ENCODE measurements at regions of chr15 and their contacts with region 1.

Region 1: DNA sequence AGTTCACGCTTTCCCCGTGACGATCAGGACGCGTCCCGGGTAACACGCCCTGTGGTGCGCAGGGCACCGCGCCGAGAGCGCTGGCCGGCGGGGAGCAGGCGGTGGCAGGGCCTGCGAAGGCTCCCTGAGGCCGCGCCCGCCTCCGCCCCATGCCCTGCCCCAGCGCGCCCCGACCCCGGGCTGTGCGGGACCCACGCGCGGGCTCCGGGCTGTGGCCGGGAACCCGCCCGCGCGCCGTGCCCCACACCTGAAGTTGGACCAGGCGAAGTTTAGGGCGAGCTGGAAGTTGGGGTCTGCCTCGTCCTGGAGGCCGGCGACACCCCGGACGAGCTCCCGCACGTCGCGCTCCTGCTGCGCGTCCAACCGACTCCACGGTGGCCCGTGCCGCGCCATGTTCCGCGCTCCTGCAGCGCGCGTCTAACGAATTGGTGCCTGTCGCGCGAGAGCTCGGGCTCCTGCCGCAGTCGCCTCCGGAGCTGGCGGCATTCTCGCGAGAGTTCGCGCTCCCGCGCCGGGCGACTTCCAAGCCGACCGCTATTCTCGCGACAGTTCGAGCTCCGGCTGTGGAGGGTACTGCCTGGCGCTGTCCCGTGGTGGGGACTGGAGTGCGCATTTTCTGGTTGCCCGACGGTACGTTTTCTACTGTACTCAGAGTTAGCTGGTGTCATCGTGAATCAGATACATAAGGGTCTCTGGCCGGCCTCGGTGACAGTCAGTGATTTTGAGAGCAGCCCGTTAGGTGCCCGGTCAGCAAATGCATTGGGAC is at the start of gene TUBGCP5:
- DNase-seq: peak; percentile 87 to 98 (median 94)
- H3K4me3 ChIP-seq: peak within 1 kb of the TSS; percentile 54 to 98 (median 76)
- H3K27ac ChIP-seq: peak within 1 kb of the TSS in 58 of 59 donors; percentile 25 to 94 (median 80)
- H3K27me3 ChIP-seq: no peaks in the 10 kb centered on the region
- CTCF ChIP-seq: peak in 54 of 56 donors; percentile 16 to 65 (median 46)
- total RNA-seq, gene TUBGCP5: 15.4 to 49.6 (median 31.7) TPM

Region 2: GRCh38 chr15:22980189-22981050 is 58.9 kb before region 1 on chr15 and contains the start of gene CYFIP1:
- intact Hi-C with region 1: loop called in 1 of 2 experiments (anchors 5 kb)
- DNase-seq: peak in 8 of 10 donors; percentile 44 to 82 (median 60)
- H3K4me3 ChIP-seq: peak within 1 kb of the TSS; percentile 57 to 94 (median 84)
- H3K27ac ChIP-seq: peak within 1 kb of the TSS in 55 of 59 donors; percentile 12 to 88 (median 74)
- H3K27me3 ChIP-seq: no peaks in the 10 kb centered on the region
- CTCF ChIP-seq: no peak
- total RNA-seq, gene CYFIP1: 46.3 to 138 (median 84.8) TPM

Region 3: DNA sequence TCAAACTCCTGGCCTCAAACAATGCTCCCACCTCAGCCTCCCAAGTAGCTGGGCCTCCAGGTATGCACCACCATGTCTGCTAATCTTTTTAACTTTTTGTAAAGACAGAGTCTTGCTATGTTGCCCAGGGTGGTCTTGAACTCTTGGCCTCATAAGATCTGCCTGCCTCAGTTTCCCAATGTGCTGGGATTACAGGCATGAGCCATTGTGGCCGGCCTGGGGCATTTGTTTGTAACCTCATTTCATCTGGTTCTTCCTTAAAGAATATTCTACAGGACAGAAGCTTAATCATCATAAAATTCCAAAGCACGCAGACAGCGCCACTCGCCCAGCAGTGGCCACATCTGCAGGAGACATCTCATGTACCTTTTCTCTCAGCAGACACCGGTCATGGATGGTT is 35.6 kb before region 1 on chr15:
- intact Hi-C with region 1: no loop called
- DNase-seq: no peak
- H3K4me3 ChIP-seq: no peak overlapping the region
- H3K27ac ChIP-seq: no peak overlapping the region
- H3K27me3 ChIP-seq: no peaks in the 10 kb centered on the region
- CTCF ChIP-seq: no peak

Region 4: GRCh38 chr15:23472678-23473077 is 433.3 kb after region 1 on chr15:
- intact Hi-C with region 1: loop called in 1 of 2 experiments (anchors 5 kb)
- DNase-seq: peak in 1 of 10 donors; percentile 50
- H3K4me3 ChIP-seq: no peak overlapping the region
- H3K27ac ChIP-seq: no peak overlapping the region
- H3K27me3 ChIP-seq: no peaks in the 10 kb centered on the region
- CTCF ChIP-seq: no peak

Measured in dorsolateral prefrontal cortex (tissue), 120 donors.